Right ventricle myocardium superior (tissue), 1 donor: ENCODE measurements at regions of chr6 and their contacts with region 1.

Region 1: GRCh38 chr6:47787620-47788497 is 6.0 kb downstream of the OPN5 start:
- DNase-seq: peak; percentile 64
- ATAC-seq: peak; percentile 69

Region 2: DNA sequence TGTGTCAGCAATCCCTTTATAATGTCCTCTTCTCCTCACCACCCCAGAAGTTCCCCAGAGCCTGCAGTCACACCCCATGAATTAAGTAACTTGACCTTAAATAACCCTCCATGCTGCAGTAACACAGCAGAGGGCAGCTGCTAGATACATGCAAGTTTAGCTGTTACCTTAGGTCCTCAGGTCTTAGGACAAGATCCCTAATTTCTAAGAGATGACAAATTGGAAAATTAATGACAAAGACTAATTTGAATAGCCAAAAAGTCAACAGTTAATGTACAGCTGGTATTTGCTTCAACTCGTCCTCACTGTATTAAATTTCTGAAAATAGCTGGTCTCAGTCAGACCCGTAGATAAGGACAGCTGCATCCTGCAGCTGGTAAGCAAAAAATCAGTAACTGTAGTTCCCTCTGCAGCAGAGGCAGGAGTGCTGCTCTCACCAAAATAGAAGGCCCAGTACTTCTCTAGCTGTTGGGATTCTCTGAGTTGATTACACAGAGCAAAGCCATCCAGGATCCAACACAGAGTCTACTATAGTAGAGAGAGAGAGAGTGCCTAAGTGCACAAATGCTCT is 540.5 kb before region 1 on chr6:
- intact Hi-C with region 1: no loop called
- DNase-seq: no peak
- ATAC-seq: peak; percentile 78

Region 3: DNA sequence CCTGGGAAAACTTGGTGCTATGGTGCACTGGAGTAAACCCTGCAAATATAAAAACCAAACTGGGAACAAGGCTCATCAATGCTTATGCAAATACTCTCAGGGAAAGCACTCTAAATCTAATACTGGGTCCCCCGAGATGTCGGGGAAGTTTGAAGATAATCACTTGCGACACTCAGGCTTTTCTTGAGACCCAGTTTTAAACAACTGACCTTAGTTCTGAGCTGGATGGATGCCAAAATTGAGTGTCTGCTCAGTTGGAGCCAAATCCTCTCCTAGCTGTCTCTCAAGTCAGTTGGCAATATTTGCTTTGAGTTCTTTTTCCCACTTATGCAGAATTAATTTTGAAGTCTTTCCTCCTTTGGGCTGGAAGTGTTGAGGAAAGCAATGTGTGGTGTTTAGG is 385.8 kb before region 1 on chr6:
- intact Hi-C with region 1: no loop called
- DNase-seq: no peak
- ATAC-seq: no peak

Region 4: DNA sequence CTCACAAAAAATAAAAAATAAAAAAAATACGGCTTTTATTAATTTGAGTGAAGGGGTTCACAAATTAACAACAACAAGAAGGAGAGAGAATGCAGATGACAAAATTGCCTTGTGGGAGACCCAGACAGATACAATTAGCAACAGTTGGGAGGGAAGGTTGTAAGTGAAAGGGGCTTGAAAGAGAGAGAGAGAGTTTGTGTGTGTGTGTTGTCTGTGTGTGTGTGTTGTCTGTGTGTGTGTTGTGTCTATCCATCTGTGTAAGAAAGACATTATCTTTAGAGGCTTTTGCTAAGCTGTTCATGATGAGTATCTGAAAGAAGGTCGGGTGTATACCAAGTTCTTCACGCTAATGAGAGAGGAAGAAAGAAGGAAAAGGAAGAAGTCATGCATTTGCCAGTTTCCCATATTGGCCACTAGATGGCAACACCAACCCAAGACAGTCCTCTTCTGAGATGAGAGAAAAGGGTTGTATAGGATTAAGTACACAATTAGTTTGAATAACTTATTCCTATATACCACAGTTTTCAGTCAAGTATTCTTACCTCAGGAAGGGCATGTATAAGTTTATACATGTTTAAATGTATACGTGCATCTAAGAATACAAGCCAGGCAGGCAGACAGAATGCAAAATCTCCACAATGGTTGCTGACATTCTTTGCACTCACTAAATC is 374.0 kb before region 1 on chr6:
- intact Hi-C with region 1: loop called (anchors 5 kb)
- DNase-seq: no peak
- ATAC-seq: peak; percentile 95

Region 5: DNA sequence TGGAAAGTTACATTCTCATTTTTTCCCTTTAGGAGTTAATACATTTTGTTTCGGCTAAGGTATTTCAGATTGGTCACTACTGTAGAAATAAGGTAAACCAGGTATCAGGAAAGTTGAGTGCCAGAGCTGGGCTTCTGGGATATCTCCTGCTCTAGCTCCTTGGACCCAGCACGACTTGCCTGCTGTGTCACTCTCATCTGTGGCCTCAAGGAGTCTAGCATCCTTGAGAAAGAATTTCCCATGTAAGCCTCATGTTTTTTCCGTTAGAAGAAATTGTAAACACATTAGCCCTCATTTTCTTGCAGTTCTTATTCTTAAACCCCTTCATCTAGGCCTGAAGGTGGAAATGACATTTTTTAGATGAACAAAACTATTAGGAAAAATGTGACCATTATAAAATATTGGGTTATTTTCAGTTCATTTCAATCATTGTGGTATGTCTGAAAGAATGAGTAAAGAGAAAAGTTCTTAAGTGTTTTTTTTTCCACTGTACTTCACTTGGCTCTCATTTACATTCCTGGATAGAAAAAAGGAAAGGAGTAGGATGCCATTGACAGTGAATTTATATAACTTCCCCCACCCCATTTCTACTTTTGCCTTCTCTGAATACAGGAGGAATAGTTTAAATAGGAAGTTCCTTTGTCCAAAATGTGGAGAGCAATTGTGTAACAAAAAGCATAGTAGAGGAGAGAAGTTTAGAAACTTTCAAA is 263.6 kb before region 1 on chr6:
- intact Hi-C with region 1: no loop called
- DNase-seq: no peak
- ATAC-seq: no peak

Region 6: GRCh38 chr6:47865206-47865605 is 77.3 kb after region 1 on chr6:
- intact Hi-C with region 1: no loop called
- DNase-seq: no peak
- ATAC-seq: no peak

Region 7: DNA sequence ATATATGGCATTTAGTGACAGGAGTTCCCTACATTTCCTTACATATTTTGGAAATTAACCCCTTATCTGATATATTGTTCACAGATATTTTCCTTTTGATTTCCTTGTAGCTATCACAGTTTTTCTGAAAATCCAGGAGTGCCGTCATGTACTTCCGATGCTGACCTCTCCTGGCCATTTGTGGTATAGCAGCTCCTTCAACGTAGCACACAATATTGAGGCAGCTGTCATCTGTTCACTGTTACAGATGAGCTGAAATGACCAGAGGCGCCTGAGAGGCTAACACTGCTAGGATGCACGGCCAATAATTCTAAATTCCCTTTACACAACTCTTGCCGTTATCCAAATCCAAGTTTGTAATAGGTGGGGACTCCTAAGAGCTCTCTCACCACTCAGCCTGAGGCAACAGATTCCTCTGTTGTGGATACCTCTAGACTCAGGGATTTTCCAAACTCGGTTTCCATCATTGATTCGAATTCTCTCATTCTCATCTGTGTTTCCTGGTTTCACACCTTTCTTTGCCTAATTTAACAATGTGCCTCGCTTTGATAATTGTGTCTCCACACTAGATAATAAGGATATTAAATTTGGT is 1622.2 kb after region 1 on chr6:
- intact Hi-C with region 1: loop called (anchors 5 kb)
- DNase-seq: peak; percentile 39
- ATAC-seq: peak; percentile 61